ENCODE measurements at regions of chr4 and their contacts with region 1.

Region 1: DNA sequence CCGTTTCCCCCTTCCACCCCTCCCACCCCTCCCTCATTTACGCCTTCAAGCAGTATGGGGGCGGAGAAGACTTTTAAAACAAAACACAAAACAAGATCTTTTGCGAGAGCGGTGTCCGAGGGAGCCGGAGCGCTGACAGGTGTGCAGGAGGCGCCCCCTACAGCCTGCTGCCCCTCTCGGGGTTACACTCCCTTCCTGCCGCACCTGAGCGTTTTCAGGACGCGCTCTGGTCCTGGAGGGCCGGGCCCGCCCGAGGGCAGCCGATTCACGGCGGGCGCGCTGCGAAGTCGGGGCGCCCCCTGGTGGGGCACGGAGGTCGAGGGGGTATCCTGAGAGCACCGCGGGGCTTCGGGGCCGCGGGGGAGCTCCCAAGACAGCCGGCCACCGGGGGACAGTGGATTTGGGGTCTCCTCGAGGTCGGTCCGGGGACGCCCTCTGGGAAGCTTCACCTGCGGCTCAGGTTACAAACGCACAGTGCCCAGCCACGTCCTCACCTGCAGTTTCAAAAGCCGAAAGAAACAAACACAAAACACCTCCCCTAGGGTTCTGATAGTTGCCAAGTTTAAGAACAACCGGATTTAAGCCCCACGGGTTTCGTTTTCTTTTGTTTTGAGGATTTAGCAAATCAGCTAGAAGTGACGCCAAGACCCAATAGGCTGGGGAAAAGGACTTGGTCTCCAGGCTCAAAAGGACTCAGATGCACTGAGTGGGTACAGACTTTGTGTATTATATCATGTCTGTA is 8.0 kb upstream of the NEUROG2 start:
- DNase-seq: peak; percentile 84
- ATAC-seq: peak; percentile 89
- H3K4me3 Mint-ChIP-seq: peak overlapping the region; percentile 69
- H3K27ac Mint-ChIP-seq: no peak overlapping the region
- H3K4me1 Mint-ChIP-seq: peaks cover 37% of the 10 kb centered on the region
- H3K27me3 Mint-ChIP-seq: peaks cover 75% of the 10 kb centered on the region

Region 2: GRCh38 chr4:112327965-112328733 is 195.8 kb before region 1 on chr4:
- CTCF ChIA-PET with region 1: interaction called, 58 read pairs
- DNase-seq: no peak
- ATAC-seq: peak; percentile 81
- H3K4me3 Mint-ChIP-seq: no peak overlapping the region
- H3K27ac Mint-ChIP-seq: no peak overlapping the region
- H3K4me1 Mint-ChIP-seq: peaks cover 8% of the 10 kb centered on the region
- H3K27me3 Mint-ChIP-seq: no peaks in the 10 kb centered on the region

Region 3: DNA sequence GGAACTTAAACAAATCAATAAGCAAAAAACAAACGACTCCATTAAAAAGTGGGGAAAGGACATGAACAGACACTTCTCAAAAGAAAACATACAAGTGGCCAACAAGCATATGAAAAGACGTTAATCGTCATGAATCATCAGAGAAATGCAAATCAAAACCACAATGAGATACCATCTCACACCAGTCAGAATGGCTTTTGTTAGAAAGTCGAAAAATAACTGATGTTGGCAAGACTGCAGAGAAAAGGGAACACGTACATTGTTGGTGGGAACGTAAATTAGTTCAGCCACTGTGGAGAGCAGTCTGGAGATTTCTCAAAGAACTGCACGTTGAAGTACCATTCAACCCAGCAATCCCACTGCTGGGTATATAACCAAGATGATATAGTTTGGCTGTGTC is 31.6 kb before region 1 on chr4:
- CTCF ChIA-PET with region 1: no interaction called
- DNase-seq: no peak
- ATAC-seq: no peak
- H3K4me3 Mint-ChIP-seq: no peak overlapping the region
- H3K27ac Mint-ChIP-seq: no peak overlapping the region
- H3K4me1 Mint-ChIP-seq: no peaks in the 10 kb centered on the region
- H3K27me3 Mint-ChIP-seq: peaks cover 2% of the 10 kb centered on the region

Region 4: GRCh38 chr4:112509243-112510141 is 14.4 kb before region 1 on chr4:
- CTCF ChIA-PET with region 1: interaction called, 74 read pairs
- DNase-seq: no peak
- ATAC-seq: no peak
- H3K4me3 Mint-ChIP-seq: peak overlapping the region; percentile 36
- H3K27ac Mint-ChIP-seq: no peak overlapping the region
- H3K4me1 Mint-ChIP-seq: peaks cover 27% of the 10 kb centered on the region
- H3K27me3 Mint-ChIP-seq: peaks cover 89% of the 10 kb centered on the region

Measured in activated CD8-positive, alpha-beta memory T cell treated with anti-CD3 and anti-CD28 coated beads, Interleukin-2, amount 10 ng/mL, durations not matched to agents 7 days and 5 days (primary cell).